Endothelial cell of umbilical vein (primary cell): ENCODE measurements at regions of chr2 and their contacts with region 1.

Region 1: GRCh38 chr2:219278655-219279516 is at the start of gene DNAJB2:
- DNase-seq: peak; percentile 99
- H3K4me3 ChIP-seq: peak within 1 kb of the TSS; percentile 9 to 55 (median 47)
- H3K27ac ChIP-seq: peak within 1 kb of the TSS; percentile 85
- H3K4me1 ChIP-seq: peaks cover 17% of the 10 kb centered on the region
- H3K27me3 ChIP-seq: no peaks in the 10 kb centered on the region
- CTCF ChIP-seq: no peak
- POLR2A ChIP-seq: peak; percentile 93
- total RNA-seq, gene DNAJB2: 27.3 and 30.4 TPM in 2 replicates

Region 2: DNA sequence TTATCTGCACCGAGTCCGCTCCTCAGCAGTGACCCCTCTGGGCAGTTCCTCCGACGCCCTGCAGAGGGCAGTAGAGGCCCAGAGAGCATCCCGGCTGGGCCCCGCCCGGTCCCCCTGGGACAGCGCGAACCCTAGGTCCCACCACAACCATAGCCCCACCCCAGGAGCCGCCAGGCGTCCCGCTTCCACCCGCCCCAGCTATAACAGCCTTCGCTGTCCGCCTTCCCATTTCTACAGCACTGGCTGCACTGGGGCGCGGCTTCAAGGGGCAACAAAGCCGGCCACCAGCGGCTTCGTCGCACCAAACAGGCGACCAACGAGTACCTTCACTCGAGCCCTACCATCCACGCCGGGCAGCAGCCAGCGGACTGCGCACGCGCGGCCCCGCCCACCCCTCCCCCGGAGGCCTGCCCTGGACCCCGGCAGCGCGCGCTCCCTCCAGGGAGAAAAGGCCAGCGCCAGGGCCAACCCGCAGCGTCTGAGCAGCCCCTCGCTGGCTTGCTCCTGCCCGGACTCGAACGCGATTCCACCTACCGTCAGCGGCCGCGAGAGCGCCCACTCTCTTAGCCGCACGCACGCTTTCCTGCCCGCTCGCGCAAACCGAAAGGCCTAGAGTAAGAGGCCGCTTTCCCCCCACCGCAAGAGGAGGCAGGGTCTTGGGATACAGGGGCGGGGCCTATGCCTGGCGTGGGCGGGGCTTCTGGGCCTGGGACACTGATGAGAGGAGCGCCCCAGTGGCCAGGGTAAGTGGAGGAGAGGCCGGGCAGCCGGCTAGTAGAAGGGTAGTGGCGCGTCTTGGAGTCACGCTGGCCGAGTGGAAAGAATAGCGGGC is 118.5 kb before region 1 on chr2 and contains the start of gene NHEJ1:
- CTCF ChIA-PET with region 1: interaction called, 3 read pairs
- POLR2A ChIA-PET with region 1: no interaction called
- dilution Hi-C with region 1: no loop called
- intact Hi-C with region 1: loop called (anchors 1 kb)
- DNase-seq: peak; percentile 96
- H3K4me3 ChIP-seq: peak within 1 kb of the TSS; percentile 24 to 89 (median 41)
- H3K27ac ChIP-seq: no peak within 1 kb of the TSS
- H3K4me1 ChIP-seq: peaks cover 10% of the 10 kb centered on the region
- H3K27me3 ChIP-seq: no peaks in the 10 kb centered on the region
- CTCF ChIP-seq: peak; percentile 96 to 99
- POLR2A ChIP-seq: peak; percentile 76
- total RNA-seq, gene NHEJ1: 12.1 and 12.9 TPM in 2 replicates

Region 3: DNA sequence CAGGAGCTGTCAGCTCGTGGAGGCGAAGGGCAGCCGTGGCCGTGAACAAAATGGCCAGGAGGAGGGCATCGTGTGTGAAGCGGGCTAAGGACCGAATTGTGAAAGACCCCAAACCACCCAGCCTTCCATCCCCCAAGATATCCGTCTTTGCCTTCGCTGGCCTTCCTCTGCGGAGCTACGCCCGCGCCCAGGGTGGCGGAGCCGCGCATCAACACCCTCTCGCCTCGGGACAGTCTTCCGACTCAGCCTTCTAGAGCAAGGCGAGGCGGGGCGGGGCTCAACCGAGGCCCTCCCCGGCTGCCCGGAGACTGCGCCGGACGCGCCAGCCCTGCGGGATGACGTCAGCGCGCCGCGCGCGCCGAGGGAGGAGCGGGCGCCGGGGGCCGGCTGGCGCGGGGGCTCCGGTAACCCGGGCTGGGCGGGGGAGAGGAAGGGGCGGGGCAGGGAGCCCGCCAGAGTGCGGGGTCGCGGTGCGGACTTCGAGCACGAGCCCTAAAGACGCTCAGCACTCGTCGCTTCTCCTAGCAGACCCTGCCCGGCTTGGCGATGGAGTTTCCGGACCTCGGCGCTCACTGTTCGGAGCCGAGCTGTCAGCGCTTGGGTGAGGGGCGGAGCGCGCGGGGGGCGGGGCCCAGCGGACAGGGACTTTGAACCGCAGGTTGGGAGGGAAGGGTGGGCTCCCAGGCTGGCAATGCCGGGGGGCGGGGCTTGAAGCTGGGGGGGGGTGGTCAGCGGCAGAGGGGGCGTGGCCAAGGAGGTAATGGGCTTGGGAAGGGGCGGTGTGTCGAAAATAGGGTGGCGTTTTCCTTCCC is 72.2 kb before region 1 on chr2 and contains the start of gene ZFAND2B:
- CTCF ChIA-PET with region 1: interaction called, 7 read pairs
- POLR2A ChIA-PET with region 1: no interaction called
- dilution Hi-C with region 1: no loop called
- intact Hi-C with region 1: loop called (anchors 1 kb)
- DNase-seq: peak; percentile 94
- H3K4me3 ChIP-seq: peak within 1 kb of the TSS; percentile 36 to 83 (median 73)
- H3K27ac ChIP-seq: peak within 1 kb of the TSS; percentile 26
- H3K4me1 ChIP-seq: peaks cover 18% of the 10 kb centered on the region
- H3K27me3 ChIP-seq: no peaks in the 10 kb centered on the region
- CTCF ChIP-seq: no peak
- POLR2A ChIP-seq: peak; percentile 99
- total RNA-seq, gene ZFAND2B: 23.3 and 24.0 TPM in 2 replicates

Region 4: DNA sequence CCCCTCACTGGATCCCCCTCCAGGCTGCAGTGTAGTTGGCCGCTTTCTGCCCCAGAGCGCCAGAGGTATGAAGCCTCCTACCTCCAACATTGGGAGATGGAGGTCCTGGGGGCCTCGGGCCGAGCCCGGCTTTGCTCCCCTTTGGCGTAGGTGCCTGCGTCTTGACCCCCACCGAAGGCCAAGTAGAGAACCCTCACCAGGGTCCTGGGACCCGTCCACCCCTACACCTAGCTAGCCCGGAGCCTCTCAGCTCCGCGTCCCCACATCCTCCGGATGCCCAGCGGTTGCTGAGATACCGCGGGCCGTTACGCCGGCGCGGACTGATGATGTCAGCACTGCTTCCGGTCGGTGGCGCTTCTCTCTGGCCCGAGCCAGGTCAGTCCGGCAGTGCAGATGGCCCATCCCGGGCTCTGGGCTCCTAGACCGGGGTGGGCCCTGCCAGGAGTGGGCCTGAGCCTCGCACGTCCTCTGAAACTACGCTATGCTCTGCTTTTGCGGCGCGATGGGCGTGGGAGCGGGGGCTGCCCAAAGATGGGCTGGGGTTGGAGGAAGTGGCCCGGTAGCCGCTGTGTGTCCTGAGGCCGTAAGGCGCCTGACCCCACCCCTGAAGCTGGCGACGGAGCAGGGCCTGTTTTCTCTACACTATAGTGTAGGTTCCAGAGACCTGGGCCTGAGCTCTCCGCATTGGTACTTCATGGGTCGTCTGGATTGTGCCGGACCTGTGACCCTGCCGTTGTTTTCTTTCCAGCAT is 33.6 kb before region 1 on chr2 and contains the starts of genes GLB1L and STK16:
- CTCF ChIA-PET with region 1: interaction called, 17 read pairs
- POLR2A ChIA-PET with region 1: interaction called, 6 read pairs
- dilution Hi-C with region 1: no loop called
- intact Hi-C with region 1: loop called (anchors 1 kb)
- DNase-seq: peak; percentile 91
- H3K4me3 ChIP-seq: peak within 1 kb of the TSS; percentile 67 to 80 (median 67)
- H3K27ac ChIP-seq: peak within 1 kb of the TSS; percentile 92
- H3K4me1 ChIP-seq: peaks cover 28% of the 10 kb centered on the region
- H3K27me3 ChIP-seq: no peaks in the 10 kb centered on the region
- CTCF ChIP-seq: no peak
- POLR2A ChIP-seq: peak; percentile 93
- total RNA-seq, gene GLB1L: 9.2 and 9.5 TPM in 2 replicates
- total RNA-seq, gene STK16: 18.8 and 21.1 TPM in 2 replicates

Region 5: GRCh38 chr2:219388127-219388844 is 109.4 kb after region 1 on chr2:
- CTCF ChIA-PET with region 1: no interaction called
- POLR2A ChIA-PET with region 1: interaction called, 3 read pairs
- dilution Hi-C with region 1: no loop called
- intact Hi-C with region 1: loop called (anchors 5 kb)
- DNase-seq: peak; percentile 96
- H3K4me3 ChIP-seq: peak overlapping the region in 2 of 3 experiments; percentile 46 to 55
- H3K27ac ChIP-seq: no peak overlapping the region
- H3K4me1 ChIP-seq: peaks cover 9% of the 10 kb centered on the region
- H3K27me3 ChIP-seq: peaks cover 2% of the 10 kb centered on the region in 2 experiments
- CTCF ChIP-seq: peak; percentile 47 to 56
- POLR2A ChIP-seq: no peak